Aorta (tissue), 5 donors: ENCODE measurements at regions of chr11 and their contacts with region 1.

Region 1: GRCh38 chr11:49221112-49221511 is 12.7 kb upstream of the FOLH1 start:
- DNase-seq: no peak
- ATAC-seq: no peak
- H3K4me3 ChIP-seq: no peak overlapping the region
- H3K27ac ChIP-seq: no peak overlapping the region
- H3K4me1 ChIP-seq: no peaks in the 10 kb centered on the region
- H3K27me3 ChIP-seq: no peaks in the 10 kb centered on the region

Region 2: GRCh38 chr11:49442669-49443068 is 221.6 kb after region 1 on chr11:
- intact Hi-C with region 1: no loop called
- DNase-seq: no peak
- ATAC-seq: peak; percentile 33
- H3K4me3 ChIP-seq: no peak overlapping the region
- H3K27ac ChIP-seq: no peak overlapping the region
- H3K4me1 ChIP-seq: no peaks in the 10 kb centered on the region
- H3K27me3 ChIP-seq: no peaks in the 10 kb centered on the region

Region 3: DNA sequence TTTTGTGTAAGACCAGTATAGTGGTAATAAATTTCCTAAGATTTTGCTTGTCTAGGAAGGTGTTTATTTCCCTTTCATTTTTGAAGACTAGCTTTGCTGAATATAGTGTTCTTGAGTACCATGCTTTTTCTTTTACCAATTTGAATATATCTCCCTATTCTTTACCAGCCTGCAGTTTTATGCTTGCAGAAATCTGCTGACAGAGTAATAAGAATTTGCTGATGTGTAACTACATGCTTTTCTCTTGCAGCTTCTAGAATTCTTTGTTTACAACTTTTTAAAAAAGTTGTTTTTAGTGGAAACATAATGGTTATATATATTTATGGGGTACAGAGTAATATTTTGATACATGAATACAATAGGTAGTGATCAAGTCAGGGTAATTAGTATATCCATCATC is 312.1 kb after region 1 on chr11:
- intact Hi-C with region 1: loop called in 1 of 2 experiments (anchors 10 kb)
- DNase-seq: no peak
- ATAC-seq: no peak
- H3K4me3 ChIP-seq: no peak overlapping the region
- H3K27ac ChIP-seq: no peak overlapping the region
- H3K4me1 ChIP-seq: no peaks in the 10 kb centered on the region
- H3K27me3 ChIP-seq: no peaks in the 10 kb centered on the region